K562 (cell line): ENCODE measurements at regions of chr7 and their contacts with region 1.

Region 1: DNA sequence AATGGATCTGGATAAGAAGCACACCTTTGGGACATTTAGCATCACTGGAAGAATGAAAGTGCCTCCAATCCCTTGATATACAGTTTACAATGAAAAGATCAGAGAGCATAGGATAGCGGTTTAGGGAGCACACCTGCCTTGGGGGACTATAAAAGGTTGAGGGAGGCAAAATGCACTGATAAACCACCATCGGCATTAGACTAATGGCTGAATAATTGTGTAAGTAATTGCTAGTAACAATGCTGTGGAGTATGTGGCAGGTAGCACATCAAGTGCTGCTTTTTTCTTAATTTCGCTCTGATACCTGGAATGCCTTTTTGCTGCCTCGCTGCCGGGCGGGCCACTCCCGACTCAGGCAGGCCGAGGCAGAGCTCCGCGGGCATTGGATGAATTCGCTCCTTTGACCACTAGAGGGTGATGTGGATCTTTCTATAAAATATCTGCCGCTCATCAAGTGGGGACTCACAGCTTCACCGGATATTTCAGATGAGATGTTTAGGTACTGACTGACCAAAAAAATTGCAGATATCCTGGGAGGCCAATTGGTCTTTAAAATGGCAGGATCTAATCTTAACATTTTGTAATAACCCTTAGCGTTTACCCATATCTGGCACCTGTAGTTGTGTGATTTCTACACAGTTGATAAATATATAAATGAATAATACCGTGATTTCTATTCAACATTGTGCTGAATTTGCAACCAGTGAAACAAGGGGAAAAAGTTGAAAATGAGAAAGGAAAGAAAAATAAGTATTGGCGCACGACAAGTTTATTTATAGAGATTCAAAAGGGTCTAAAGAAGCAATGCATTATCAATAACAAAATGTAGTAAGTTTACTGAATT is 116.8 kb upstream of the PRSS1 start:
- DNase-seq: peak; percentile 80 to 85 (median 84)
- ATAC-seq: peak; percentile 98
- H3K4me3 ChIP-seq: no peak overlapping the region
- H3K27ac ChIP-seq: no peak overlapping the region
- H3K4me1 ChIP-seq: no peaks in the 10 kb centered on the region
- H3K27me3 ChIP-seq: peaks cover 0 to 5% of the 10 kb centered on the region in 2 experiments; a peak in 3 of 5 replicates
- CTCF ChIP-seq: peak; percentile 89 to 90 (median 89)
- EP300 ChIP-seq: no peak
- POLR2A ChIP-seq: no peak
- RAD21 ChIP-seq: peak; percentile 81 to 83

Region 2: DNA sequence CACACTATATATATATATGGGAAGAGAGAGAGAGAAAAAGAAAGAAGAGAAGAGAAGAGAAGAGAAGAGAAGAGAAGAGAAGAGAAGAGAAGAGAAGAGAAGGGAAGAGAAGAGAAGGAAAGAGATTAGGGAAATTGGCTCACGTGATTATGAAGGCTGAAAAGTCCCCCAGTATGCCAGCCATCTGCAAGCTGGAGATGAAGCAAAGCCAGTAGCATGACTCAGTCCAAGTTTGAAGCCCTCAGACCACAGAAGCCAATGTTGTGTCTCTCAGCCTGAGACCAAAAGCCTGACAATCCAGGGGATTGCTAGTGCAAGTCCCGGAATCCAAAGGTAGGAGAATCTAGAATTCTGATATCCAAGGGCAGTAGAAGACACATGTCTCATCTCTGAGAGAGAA is 89.6 kb before region 1 on chr7:
- CTCF ChIA-PET with region 1: no interaction called
- POLR2A ChIA-PET with region 1: no interaction called
- in situ Hi-C with region 1: no loop called
- intact Hi-C with region 1: no loop called
- DNase-seq: no peak
- ATAC-seq: no peak
- H3K4me3 ChIP-seq: no peak overlapping the region
- H3K27ac ChIP-seq: no peak overlapping the region
- H3K4me1 ChIP-seq: no peaks in the 10 kb centered on the region
- H3K27me3 ChIP-seq: peaks cover 0 to 3% of the 10 kb centered on the region in 2 experiments; a peak in 2 of 5 replicates
- CTCF ChIP-seq: no peak
- EP300 ChIP-seq: no peak
- POLR2A ChIP-seq: no peak
- RAD21 ChIP-seq: no peak

Region 3: DNA sequence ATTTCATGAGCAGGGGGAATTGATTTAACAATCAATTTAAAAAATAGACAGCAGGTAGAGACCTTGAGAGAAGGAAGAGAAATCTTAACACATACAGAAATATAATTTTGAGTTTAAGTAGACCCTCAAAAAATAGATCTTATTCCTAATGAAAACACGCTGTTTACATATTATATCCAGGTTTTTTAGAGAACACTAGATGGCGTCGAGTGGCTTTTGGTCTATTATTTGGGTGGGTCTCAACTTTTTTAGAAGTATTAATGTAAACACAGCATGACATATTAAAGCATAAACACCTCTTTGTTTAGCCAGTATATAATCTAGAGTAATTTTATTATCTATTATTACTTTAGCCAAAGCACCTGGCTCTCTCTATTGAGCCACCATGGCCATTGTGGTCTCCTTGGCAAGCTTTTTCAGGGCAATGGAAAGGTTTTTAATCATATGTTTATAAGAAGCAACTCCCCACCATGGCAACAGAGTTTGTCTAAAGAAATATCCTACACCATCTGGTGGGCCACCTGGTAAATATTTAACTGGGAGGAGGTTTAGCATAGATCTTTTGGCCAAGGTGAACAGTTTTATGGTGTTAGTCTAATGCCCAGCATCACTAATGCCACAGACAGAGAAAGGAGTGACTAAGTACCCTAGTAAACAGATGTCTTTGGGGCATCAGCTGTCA is 57.1 kb after region 1 on chr7:
- CTCF ChIA-PET with region 1: no interaction called
- POLR2A ChIA-PET with region 1: no interaction called
- in situ Hi-C with region 1: no loop called
- intact Hi-C with region 1: no loop called
- DNase-seq: peak in 1 of 4 experiments; percentile 7
- ATAC-seq: no peak
- H3K4me3 ChIP-seq: no peak overlapping the region
- H3K27ac ChIP-seq: no peak overlapping the region
- H3K4me1 ChIP-seq: no peaks in the 10 kb centered on the region
- H3K27me3 ChIP-seq: no peaks in the 10 kb centered on the region
- CTCF ChIP-seq: peak in 2 of 3 experiments; percentile 34 to 47; a peak in 3 of 6 replicates
- EP300 ChIP-seq: no peak
- POLR2A ChIP-seq: no peak
- RAD21 ChIP-seq: peak in 1 of 2 experiments; percentile 38; a peak in 2 of 4 replicates

Region 4: DNA sequence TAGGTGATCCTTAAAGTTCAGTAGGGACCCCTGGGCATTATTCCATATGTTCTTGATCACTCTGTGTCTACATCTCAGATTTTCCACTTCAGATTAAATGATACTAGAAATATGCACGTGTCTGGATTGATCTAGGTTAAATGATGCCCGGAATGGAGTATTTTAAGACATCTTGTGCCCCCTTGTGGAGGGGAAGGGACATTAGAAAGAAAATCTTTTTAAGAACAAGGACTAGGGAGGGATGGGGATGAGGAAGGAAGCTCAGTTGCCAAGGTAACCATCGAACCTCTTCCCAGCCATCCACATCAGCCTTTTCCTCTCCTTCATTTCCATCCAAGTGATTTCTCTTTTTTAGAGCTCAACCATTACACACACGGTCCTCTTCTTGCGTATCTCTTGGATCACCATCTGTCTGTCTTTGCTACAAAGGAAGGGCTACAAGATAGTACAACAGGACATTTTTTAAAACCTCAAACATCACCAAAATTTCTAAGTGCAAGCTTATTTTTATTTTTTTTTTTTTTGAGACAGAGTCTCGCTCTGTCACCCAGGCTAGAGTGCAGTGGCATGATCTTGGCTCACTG is 178.7 kb after region 1 on chr7:
- CTCF ChIA-PET with region 1: interaction called, 12 read pairs
- POLR2A ChIA-PET with region 1: interaction called, 4 read pairs
- in situ Hi-C with region 1: no loop called
- intact Hi-C with region 1: loop called (anchors 10 kb)
- DNase-seq: peak; percentile 70 to 77 (median 74)
- ATAC-seq: peak; percentile 82
- H3K4me3 ChIP-seq: no peak overlapping the region
- H3K27ac ChIP-seq: no peak overlapping the region
- H3K4me1 ChIP-seq: peaks cover 0 to 44% of the 10 kb centered on the region in 2 experiments; a peak in 3 of 5 replicates
- H3K27me3 ChIP-seq: no peaks in the 10 kb centered on the region; a peak in 1 of 5 replicates
- CTCF ChIP-seq: peak; percentile 67 to 86 (median 83); a peak in 5 of 6 replicates
- EP300 ChIP-seq: no peak
- POLR2A ChIP-seq: no peak
- RAD21 ChIP-seq: peak; percentile 83 to 85